ENCODE measurements at regions of chr10 and their contacts with region 1.

Region 1: DNA sequence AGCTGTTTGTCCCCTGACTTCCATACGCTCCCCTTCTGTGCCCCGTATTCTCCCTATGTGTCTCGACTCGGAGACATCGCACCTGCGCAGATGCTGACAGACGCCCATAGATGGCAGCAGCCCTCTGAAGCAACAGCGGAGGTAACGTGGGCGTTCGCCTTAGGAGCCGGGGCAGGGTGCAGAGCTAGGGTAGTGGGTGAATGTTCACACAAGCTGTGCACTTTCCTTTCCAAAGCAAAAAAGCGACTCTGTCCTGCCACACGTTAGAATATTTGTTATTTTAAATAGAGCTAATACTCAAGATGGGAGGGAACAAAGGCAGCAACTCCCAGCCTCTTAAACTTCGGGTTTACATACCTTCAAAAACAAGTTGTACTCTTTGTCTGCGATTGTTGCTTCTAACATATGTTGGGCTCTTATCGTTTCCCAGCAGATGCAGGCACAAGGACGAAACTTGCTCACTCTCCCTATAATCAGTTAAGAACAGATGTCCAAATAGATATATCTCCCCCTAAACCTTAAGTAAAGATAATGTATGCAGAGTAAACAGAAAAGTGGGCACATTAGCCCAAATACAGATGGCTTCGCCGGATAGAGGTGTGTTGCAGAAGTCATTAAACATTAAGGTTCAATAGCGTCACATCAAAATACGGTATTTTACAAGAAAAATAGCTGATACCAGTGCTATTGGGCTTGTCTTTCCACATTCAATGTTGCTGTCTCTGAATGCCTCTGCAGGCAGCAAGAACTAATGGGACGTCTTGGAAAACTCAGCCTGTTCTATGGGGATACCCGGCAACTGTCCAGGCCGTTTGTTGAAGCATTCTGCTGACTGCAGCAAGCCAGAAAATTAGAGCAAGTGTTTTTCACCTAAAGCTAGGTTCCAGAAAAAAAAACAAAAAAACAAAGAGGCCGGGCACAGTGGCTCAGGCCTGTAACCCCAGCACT is 340.3 kb upstream of the PRKCQ start:
- DNase-seq: peak; percentile 92
- ATAC-seq: peak; percentile 97
- H3K4me3 Mint-ChIP-seq: no peak overlapping the region
- H3K27ac Mint-ChIP-seq: no peak overlapping the region
- H3K4me1 Mint-ChIP-seq: peaks cover 22% of the 10 kb centered on the region
- H3K27me3 Mint-ChIP-seq: peaks cover 1% of the 10 kb centered on the region
- CTCF ChIP-seq: peak; percentile 64

Region 2: GRCh38 chr10:6936931-6937330 is 16.6 kb after region 1 on chr10:
- CTCF ChIA-PET with region 1: interaction called, 26 read pairs
- POLR2A ChIA-PET with region 1: no interaction called
- intact Hi-C with region 1: no loop called
- DNase-seq: no peak
- ATAC-seq: no peak
- H3K4me3 Mint-ChIP-seq: no peak overlapping the region
- H3K27ac Mint-ChIP-seq: no peak overlapping the region
- H3K4me1 Mint-ChIP-seq: no peaks in the 10 kb centered on the region
- H3K27me3 Mint-ChIP-seq: peaks cover 10% of the 10 kb centered on the region
- CTCF ChIP-seq: no peak

Region 3: DNA sequence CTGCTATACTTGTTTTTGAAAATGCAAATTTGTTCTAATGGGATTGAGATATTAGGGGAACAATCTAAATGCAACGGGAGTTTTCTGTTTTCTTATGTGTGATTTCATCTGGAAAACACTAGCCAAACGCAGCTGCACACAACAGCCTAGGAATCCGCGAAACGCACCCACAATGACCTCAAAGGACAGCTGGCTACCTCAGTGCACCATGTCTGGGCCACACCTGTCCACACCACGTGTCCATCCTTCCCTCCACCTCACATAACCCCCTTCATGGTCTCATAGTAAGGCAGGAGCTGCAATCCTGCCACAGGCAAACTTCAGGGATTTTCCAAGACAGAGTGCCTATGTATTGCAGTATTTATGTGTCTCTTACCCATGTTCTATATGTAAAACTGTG is 42.2 kb after region 1 on chr10:
- CTCF ChIA-PET with region 1: no interaction called
- POLR2A ChIA-PET with region 1: no interaction called
- intact Hi-C with region 1: no loop called
- DNase-seq: no peak
- ATAC-seq: no peak
- H3K4me3 Mint-ChIP-seq: no peak overlapping the region
- H3K27ac Mint-ChIP-seq: no peak overlapping the region
- H3K4me1 Mint-ChIP-seq: peaks cover 18% of the 10 kb centered on the region
- H3K27me3 Mint-ChIP-seq: no peaks in the 10 kb centered on the region
- CTCF ChIP-seq: no peak

Region 4: DNA sequence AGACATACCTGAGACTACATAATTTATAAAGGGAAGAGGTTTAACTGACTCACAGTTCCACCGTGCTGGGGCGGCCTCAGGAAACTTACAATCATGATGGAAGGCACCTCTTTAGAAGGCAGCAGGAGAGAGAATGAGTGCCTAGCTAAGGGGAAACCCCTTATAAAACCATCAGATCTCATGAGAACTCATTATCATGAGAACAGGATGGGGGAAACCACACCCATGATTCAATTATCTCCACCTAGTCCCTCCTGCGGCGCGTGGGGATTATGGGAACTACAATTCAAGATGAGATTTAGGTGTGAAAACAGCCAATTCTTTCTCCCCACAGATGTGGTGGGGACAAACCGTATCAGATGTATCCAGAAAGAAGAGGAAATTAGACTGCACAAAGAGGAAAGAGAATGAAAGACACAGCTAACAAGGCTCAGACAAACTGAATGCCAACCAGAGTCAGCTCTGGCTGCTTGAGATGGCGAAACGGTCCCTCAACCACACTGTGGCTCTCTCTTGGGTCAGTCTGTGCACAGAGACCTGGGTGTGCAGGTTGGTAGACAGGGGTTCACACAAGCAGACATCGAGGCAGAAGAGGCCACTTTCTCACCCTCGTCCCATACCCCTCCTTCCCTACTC is 114.9 kb after region 1 on chr10:
- CTCF ChIA-PET with region 1: interaction called, 16 read pairs
- POLR2A ChIA-PET with region 1: no interaction called
- intact Hi-C with region 1: loop called (anchors 10 kb)
- DNase-seq: peak; percentile 76
- ATAC-seq: peak; percentile 84
- H3K4me3 Mint-ChIP-seq: no peak overlapping the region
- H3K27ac Mint-ChIP-seq: peak overlapping the region; percentile 69
- H3K4me1 Mint-ChIP-seq: peaks cover 51% of the 10 kb centered on the region
- H3K27me3 Mint-ChIP-seq: no peaks in the 10 kb centered on the region
- CTCF ChIP-seq: no peak

Region 5: DNA sequence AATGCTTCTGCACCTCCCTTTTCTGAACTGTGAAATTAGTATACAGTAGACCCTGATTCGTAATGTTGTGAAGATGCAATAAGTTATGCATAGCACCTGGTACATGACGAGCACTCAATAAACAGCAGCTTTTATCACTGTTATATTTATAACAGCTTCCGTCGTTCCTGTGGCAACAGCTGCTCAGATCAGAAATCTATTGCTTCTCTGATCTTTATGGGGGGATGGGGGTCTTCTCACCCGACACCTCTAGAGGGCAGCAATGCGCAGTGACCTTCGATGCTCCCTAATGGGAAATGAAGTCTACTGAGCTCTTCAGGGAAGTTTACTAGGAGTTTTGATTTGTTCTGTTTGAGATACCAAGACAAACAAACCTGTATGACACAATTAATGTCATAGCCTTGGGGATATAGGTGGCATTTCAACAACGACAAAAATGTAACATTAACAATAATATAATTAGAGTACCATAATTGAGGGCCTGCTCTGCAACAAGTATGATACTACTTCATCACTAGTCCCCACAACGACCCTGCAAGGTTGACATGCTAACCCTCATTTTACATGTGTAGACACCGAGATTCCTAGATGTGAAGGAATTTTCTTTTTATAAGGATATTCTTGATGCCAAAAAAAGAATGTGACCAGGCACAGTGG is 200.9 kb after region 1 on chr10:
- CTCF ChIA-PET with region 1: interaction called, 20 read pairs
- POLR2A ChIA-PET with region 1: no interaction called
- intact Hi-C with region 1: loop called (anchors 10 kb)
- DNase-seq: peak; percentile 82
- ATAC-seq: peak; percentile 97
- H3K4me3 Mint-ChIP-seq: no peak overlapping the region
- H3K27ac Mint-ChIP-seq: peak overlapping the region; percentile 26
- H3K4me1 Mint-ChIP-seq: peaks cover 7% of the 10 kb centered on the region
- H3K27me3 Mint-ChIP-seq: no peaks in the 10 kb centered on the region
- CTCF ChIP-seq: peak; percentile 85

Region 6: GRCh38 chr10:7205656-7206055 is 285.3 kb after region 1 on chr10:
- CTCF ChIA-PET with region 1: no interaction called
- POLR2A ChIA-PET with region 1: no interaction called
- intact Hi-C with region 1: no loop called
- DNase-seq: no peak
- ATAC-seq: no peak
- H3K4me3 Mint-ChIP-seq: no peak overlapping the region
- H3K27ac Mint-ChIP-seq: no peak overlapping the region
- H3K4me1 Mint-ChIP-seq: peaks cover 6% of the 10 kb centered on the region
- H3K27me3 Mint-ChIP-seq: no peaks in the 10 kb centered on the region
- CTCF ChIP-seq: no peak

Region 7: GRCh38 chr10:7410862-7411670 is 490.7 kb after region 1 on chr10 and contains the start of gene SFMBT2:
- CTCF ChIA-PET with region 1: interaction called, 59 read pairs
- POLR2A ChIA-PET with region 1: no interaction called
- intact Hi-C with region 1: loop called (anchors 2 kb)
- DNase-seq: peak; percentile 71
- ATAC-seq: peak; percentile 45
- H3K4me3 Mint-ChIP-seq: peak within 1 kb of the TSS; percentile 95
- H3K27ac Mint-ChIP-seq: peak within 1 kb of the TSS; percentile 97
- H3K4me1 Mint-ChIP-seq: peaks cover 41% of the 10 kb centered on the region
- H3K27me3 Mint-ChIP-seq: peaks cover 13% of the 10 kb centered on the region
- CTCF ChIP-seq: no peak
- total RNA-seq, gene SFMBT2: 23.8 to 27.6 TPM